ENCODE measurements at regions of chr1 and their contacts with region 1.

Region 1: DNA sequence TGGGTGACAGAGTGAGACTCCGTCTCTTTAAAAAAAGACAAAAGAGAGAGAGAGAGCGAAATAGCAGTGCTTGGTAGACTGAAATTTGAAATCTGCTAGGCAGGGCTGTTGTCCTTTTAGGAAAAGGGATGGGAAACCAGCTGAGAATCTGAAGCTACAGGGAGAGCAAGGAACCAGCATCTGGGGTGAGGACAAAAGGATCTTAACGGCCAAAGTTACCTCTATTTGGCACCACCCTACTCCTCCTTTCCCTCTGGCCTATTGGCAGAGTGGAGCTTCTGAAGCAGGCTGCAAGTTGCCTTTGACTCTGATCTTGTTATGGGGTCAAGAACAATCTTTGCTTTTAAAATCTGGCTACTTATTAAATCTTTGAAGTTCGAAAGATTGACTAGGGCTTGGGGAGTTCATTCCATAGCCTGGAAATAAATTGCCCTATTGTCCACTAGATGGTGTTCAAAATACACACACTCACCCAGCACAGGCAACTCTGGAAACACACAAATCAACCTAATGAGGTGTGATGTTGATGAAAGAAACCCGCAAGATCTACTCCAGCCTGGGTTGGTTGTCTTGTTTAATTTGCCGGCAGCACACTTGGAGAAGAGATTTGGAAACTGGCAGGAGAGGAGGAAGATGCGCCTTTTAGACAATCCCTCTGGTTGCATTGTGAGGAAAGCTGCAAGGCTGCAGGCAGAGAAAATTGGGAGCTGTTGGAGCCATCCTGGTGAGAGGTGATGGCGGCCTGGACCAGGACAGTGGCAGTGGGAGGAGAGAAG is 16.5 kb upstream of the PARP1 start:
- DNase-seq: no peak
- ATAC-seq: peak; percentile 67 to 94 (median 90)
- H3K4me3 ChIP-seq: no peak overlapping the region
- H3K27ac ChIP-seq: no peak overlapping the region
- H3K4me1 ChIP-seq: no peaks in the 10 kb centered on the region
- H3K27me3 ChIP-seq: no peaks in the 10 kb centered on the region
- CTCF ChIP-seq: peak; percentile 19 to 58 (median 40)

Region 2: GRCh38 chr1:226186124-226187018 is 238.0 kb before region 1 on chr1 and contains the start of gene ACBD3:
- intact Hi-C with region 1: no loop called
- DNase-seq: peak; percentile 83 to 94 (median 86)
- ATAC-seq: peak; percentile 93 to 97 (median 96)
- H3K4me3 ChIP-seq: peak within 1 kb of the TSS; percentile 89 to 97 (median 95)
- H3K27ac ChIP-seq: peak within 1 kb of the TSS; percentile 88 to 93 (median 90)
- H3K4me1 ChIP-seq: peaks cover 11 to 23% (median 12%) of the 10 kb centered on the region in 3 donors
- H3K27me3 ChIP-seq: no peaks in the 10 kb centered on the region
- CTCF ChIP-seq: no peak
- total RNA-seq, gene ACBD3: 16.3 to 24.4 (median 19.7) TPM

Region 3: GRCh38 chr1:226223786-226224244 is 200.6 kb before region 1 on chr1:
- intact Hi-C with region 1: no loop called
- DNase-seq: peak in 2 of 6 donors; percentile 66 to 69
- ATAC-seq: peak in 2 of 4 donors; percentile 49 to 65
- H3K4me3 ChIP-seq: peak overlapping the region in 2 of 4 donors; percentile 25 to 40
- H3K27ac ChIP-seq: no peak overlapping the region
- H3K4me1 ChIP-seq: no peaks in the 10 kb centered on the region
- H3K27me3 ChIP-seq: no peaks in the 10 kb centered on the region
- CTCF ChIP-seq: no peak

Region 4: GRCh38 chr1:226532553-226532952 is 108.1 kb after region 1 on chr1:
- intact Hi-C with region 1: no loop called
- DNase-seq: no peak
- ATAC-seq: no peak
- H3K4me3 ChIP-seq: no peak overlapping the region
- H3K27ac ChIP-seq: no peak overlapping the region
- H3K4me1 ChIP-seq: peaks cover 4 to 10% (median 7%) of the 10 kb centered on the region in 3 donors
- H3K27me3 ChIP-seq: no peaks in the 10 kb centered on the region
- CTCF ChIP-seq: no peak

Region 5: DNA sequence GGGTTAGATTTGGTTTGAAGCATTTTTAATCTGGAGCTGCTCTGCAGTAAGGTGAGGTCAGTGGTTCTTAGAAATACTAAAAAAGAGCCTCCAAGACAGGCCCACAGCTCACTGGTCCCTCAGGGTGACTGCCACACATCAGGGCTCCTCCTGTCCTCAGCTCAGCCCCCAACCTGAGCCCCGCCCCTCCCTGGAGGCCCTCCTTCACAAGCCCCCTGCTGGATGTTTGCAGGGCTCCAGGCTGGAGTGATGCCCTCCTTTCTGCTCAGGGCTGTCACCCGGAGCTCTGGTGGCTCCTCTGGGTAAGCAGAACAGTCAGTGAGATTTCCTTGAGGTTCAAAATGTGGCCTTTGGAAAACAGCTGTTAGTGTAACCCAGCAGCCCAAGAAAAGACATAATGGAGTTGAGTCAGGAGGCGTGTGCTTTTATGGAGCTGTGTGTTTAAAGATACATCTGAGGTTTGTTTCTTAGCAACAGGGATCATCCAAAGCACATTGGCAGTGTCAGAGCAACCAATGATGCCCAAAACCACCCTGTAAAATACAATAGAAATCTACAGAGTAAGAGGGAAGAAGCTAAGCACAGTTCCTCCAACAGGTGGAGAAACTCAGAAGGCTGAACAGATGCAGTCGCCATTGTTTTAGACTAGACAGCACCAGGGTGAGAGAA is 145.6 kb after region 1 on chr1:
- intact Hi-C with region 1: no loop called
- DNase-seq: peak in 1 of 6 donors; percentile 32
- ATAC-seq: no peak
- H3K4me3 ChIP-seq: no peak overlapping the region
- H3K27ac ChIP-seq: no peak overlapping the region
- H3K4me1 ChIP-seq: no peaks in the 10 kb centered on the region
- H3K27me3 ChIP-seq: no peaks in the 10 kb centered on the region
- CTCF ChIP-seq: no peak

Region 6: GRCh38 chr1:226608699-226609505 is 184.5 kb after region 1 on chr1:
- intact Hi-C with region 1: loop called in 1 of 3 experiments (anchors 10 kb)
- DNase-seq: peak in 5 of 6 donors; percentile 47 to 86 (median 72)
- ATAC-seq: peak; percentile 68 to 93 (median 82)
- H3K4me3 ChIP-seq: no peak overlapping the region
- H3K27ac ChIP-seq: no peak overlapping the region
- H3K4me1 ChIP-seq: no peaks in the 10 kb centered on the region
- H3K27me3 ChIP-seq: no peaks in the 10 kb centered on the region
- CTCF ChIP-seq: peak; percentile 74 to 84 (median 81)